Vagina (tissue), 2 donors: ENCODE measurements at regions of chr2 and their contacts with region 1.

Region 1: GRCh38 chr2:173017646-173018420 is 57.8 kb upstream of the MAP3K20 start:
- DNase-seq: no peak
- H3K4me3 ChIP-seq: no peak overlapping the region
- H3K27ac ChIP-seq: no peak overlapping the region
- H3K4me1 ChIP-seq: no peaks in the 10 kb centered on the region
- H3K27me3 ChIP-seq: no peaks in the 10 kb centered on the region
- CTCF ChIP-seq: no peak
- POLR2A ChIP-seq: no peak

Region 2: GRCh38 chr2:172806493-172806892 is 211.3 kb before region 1 on chr2:
- intact Hi-C with region 1: loop called (anchors 10 kb)
- DNase-seq: no peak
- H3K4me3 ChIP-seq: no peak overlapping the region
- H3K27ac ChIP-seq: no peak overlapping the region
- H3K4me1 ChIP-seq: no peaks in the 10 kb centered on the region
- H3K27me3 ChIP-seq: no peaks in the 10 kb centered on the region
- CTCF ChIP-seq: peak; percentile 50 to 77 (median 63)
- POLR2A ChIP-seq: no peak